H1 (cell line): ENCODE measurements at regions of chr6 and their contacts with region 1.

Region 1: GRCh38 chr6:52049252-52050050 is 38.0 kb downstream of the PKHD1 start:
- DNase-seq: no peak
- H3K4me3 ChIP-seq: no peak overlapping the region
- H3K27ac ChIP-seq: no peak overlapping the region
- H3K4me1 ChIP-seq: no peaks in the 10 kb centered on the region; a peak in 1 of 7 replicates
- H3K27me3 ChIP-seq: no peaks in the 10 kb centered on the region; a peak in 1 of 7 replicates
- CTCF ChIP-seq: peak in 2 of 3 experiments; percentile 38 to 71; a peak in 2 of 4 replicates
- EP300 ChIP-seq: no peak
- POLR2A ChIP-seq: no peak
- RAD21 ChIP-seq: peak; percentile 69 to 70

Region 2: DNA sequence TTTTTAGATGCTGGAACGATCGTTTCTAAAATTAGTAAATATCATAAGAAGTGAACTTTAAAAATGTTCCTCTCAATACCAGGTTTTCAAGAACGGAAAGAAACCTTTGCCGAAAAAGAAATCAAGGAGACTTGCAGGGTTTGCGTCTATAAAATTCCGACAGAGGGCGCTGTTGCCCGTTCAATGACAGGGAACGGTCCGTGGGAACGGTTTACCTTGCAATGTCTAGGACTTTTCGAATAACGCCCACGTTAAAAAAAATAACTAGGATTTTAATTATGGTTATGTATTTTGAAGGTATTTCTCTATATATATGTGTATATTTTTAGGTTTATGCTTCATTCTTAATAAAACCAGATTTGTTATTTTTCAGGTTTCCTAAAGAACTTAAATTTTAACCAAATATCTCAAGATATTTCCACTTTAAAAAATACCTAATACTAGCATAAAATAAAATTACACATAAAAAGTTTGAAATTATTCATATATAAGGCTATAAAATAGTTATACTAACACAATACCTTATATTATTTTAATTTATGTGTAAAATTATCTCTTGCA is 1233.3 kb before region 1 on chr6:
- CTCF ChIA-PET with region 1: interaction called, 10 read pairs
- POLR2A ChIA-PET with region 1: no interaction called
- DNase-seq: peak in 1 of 2 experiments; percentile 84
- H3K4me3 ChIP-seq: peak overlapping the region in 3 of 4 experiments; percentile 4 to 64 (median 10); a peak in 3 of 8 replicates
- H3K27ac ChIP-seq: no peak overlapping the region
- H3K4me1 ChIP-seq: peaks cover 0 to 9% (median 2%) of the 10 kb centered on the region in 4 experiments; a peak in 3 of 7 replicates
- H3K27me3 ChIP-seq: peaks cover 35 to 60% (median 47%) of the 10 kb centered on the region in 4 experiments
- CTCF ChIP-seq: peak; percentile 64 to 77 (median 70)
- EP300 ChIP-seq: no peak
- POLR2A ChIP-seq: no peak
- RAD21 ChIP-seq: peak; percentile 95 to 96

Region 3: GRCh38 chr6:52020945-52021570 is 28.4 kb before region 1 on chr6:
- CTCF ChIA-PET with region 1: interaction called, 30 read pairs
- POLR2A ChIA-PET with region 1: no interaction called
- DNase-seq: no peak
- H3K4me3 ChIP-seq: no peak overlapping the region
- H3K27ac ChIP-seq: no peak overlapping the region
- H3K4me1 ChIP-seq: peaks cover 0 to 6% (median 1%) of the 10 kb centered on the region in 4 experiments; a peak in 2 of 7 replicates
- H3K27me3 ChIP-seq: no peaks in the 10 kb centered on the region
- CTCF ChIP-seq: peak in 2 of 3 experiments; percentile 30 to 43; a peak in 2 of 4 replicates
- EP300 ChIP-seq: no peak
- POLR2A ChIP-seq: no peak
- RAD21 ChIP-seq: peak; percentile 71 to 87

Region 4: DNA sequence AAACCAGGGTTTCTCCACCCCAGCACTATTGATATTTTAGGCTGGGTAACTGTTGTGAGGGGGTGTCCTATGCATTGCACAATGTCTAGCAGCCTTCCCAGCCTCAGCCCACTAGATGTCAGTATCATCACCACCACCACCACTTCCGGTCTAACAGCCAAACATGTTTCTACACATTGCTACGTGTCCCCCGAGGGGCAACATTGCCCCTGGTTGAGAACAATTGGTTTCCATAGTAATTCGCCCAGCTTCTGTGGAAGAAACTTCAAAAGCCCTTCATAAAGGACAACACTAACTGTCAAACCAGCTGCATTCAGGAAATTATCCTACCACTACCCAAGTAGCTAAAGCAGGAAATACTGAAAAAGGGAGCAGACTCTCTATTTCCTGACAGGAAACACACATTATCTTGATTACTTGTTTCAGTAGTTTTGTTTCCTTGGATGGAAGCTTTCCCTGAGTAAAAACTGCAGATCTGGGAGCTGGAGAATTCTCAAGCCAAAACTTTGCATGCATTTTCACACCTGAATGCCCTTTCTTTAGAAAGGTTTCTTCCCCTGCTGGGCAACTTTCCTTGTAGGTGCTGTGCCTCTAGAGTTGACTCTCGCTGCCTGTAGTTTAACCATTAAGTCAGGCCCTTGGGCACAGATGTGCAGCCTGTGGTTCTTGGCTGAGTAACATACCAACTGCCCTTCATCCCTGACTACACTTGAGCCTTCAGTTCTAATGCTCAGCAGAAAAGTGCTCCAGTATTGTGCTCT is 14.3 kb after region 1 on chr6:
- CTCF ChIA-PET with region 1: interaction called, 14 read pairs
- POLR2A ChIA-PET with region 1: no interaction called
- DNase-seq: peak in 1 of 2 experiments; percentile 15
- H3K4me3 ChIP-seq: no peak overlapping the region
- H3K27ac ChIP-seq: no peak overlapping the region; the same call in 1 of the 2 replicates
- H3K4me1 ChIP-seq: peaks cover 0 to 16% (median 7%) of the 10 kb centered on the region in 4 experiments; a peak in 5 of 7 replicates
- H3K27me3 ChIP-seq: no peaks in the 10 kb centered on the region
- CTCF ChIP-seq: peak; percentile 67 to 76 (median 70)
- EP300 ChIP-seq: no peak
- POLR2A ChIP-seq: no peak
- RAD21 ChIP-seq: peak; percentile 76 to 82